ENCODE measurements at regions of chr12 and their contacts with region 1.

Region 1: GRCh38 chr12:130747867-130748740 is 32.0 kb upstream of the RIMBP2 start:
- DNase-seq: peak; percentile 66 to 80 (median 72)
- ATAC-seq: peak; percentile 100
- H3K4me3 ChIP-seq: no peak overlapping the region
- H3K27ac ChIP-seq: no peak overlapping the region
- H3K4me1 ChIP-seq: no peaks in the 10 kb centered on the region; a peak in 1 of 5 replicates
- H3K27me3 ChIP-seq: peaks cover 7 to 26% of the 10 kb centered on the region in 2 experiments
- CTCF ChIP-seq: peak; percentile 85 to 92 (median 88)
- EP300 ChIP-seq: no peak
- POLR2A ChIP-seq: no peak
- RAD21 ChIP-seq: peak; percentile 73 to 90

Region 2: DNA sequence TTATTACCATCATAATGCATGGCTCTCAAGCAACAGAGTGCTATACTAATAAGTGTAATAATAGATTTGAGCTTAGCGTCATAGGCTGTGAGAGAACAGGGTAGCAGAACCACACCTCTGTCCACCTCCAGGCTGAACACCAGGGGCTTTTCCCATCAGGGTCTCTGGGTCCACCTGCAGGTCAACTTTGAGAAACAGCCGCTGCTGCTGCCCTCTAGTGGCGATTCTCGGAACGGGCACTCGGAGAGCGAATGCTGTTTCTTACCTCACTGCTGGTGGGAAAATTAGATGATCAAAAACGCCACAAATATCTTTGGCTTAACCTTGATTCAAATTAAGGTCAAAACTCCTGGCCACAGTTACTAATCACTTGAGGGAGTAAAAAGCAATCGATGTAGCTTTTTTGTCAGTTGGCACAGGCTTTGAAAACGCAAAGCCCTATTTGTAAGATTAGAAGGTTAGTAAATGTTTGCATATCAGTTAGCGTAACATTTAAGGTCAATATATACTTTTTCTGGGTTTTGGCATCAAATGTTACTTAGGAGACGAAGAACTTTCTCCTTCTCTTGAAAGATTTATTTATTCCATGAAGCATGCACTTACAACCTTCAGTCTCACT is 716.4 kb before region 1 on chr12:
- CTCF ChIA-PET with region 1: no interaction called
- POLR2A ChIA-PET with region 1: no interaction called
- in situ Hi-C with region 1: loop called (anchors 25 kb)
- intact Hi-C with region 1: no loop called
- DNase-seq: peak; percentile 71 to 91 (median 80)
- ATAC-seq: peak; percentile 92
- H3K4me3 ChIP-seq: no peak overlapping the region
- H3K27ac ChIP-seq: no peak overlapping the region
- H3K4me1 ChIP-seq: no peaks in the 10 kb centered on the region
- H3K27me3 ChIP-seq: peaks cover 0 to 22% of the 10 kb centered on the region in 2 experiments; a peak in 4 of 5 replicates
- CTCF ChIP-seq: peak; percentile 98 to 100 (median 100)
- EP300 ChIP-seq: no peak
- POLR2A ChIP-seq: no peak
- RAD21 ChIP-seq: peak in 1 of 2 experiments; percentile 49; a peak in 2 of 4 replicates

Region 3: GRCh38 chr12:130041983-130042812 is 705.9 kb before region 1 on chr12:
- CTCF ChIA-PET with region 1: no interaction called
- POLR2A ChIA-PET with region 1: no interaction called
- in situ Hi-C with region 1: loop called (anchors 25 kb)
- intact Hi-C with region 1: loop called (anchors 5 kb)
- DNase-seq: peak; percentile 29 to 64 (median 58)
- ATAC-seq: peak; percentile 86
- H3K4me3 ChIP-seq: no peak overlapping the region
- H3K27ac ChIP-seq: no peak overlapping the region
- H3K4me1 ChIP-seq: no peaks in the 10 kb centered on the region
- H3K27me3 ChIP-seq: peaks cover 0 to 5% of the 10 kb centered on the region in 2 experiments; a peak in 2 of 5 replicates
- CTCF ChIP-seq: peak; percentile 48 to 62 (median 56)
- EP300 ChIP-seq: no peak
- POLR2A ChIP-seq: no peak
- RAD21 ChIP-seq: no peak; a peak in 1 of 4 replicates

Region 4: GRCh38 chr12:130281153-130281799 is 466.8 kb before region 1 on chr12:
- CTCF ChIA-PET with region 1: no interaction called
- POLR2A ChIA-PET with region 1: no interaction called
- in situ Hi-C with region 1: no loop called
- intact Hi-C with region 1: loop called (anchors 2 kb)
- DNase-seq: peak; percentile 50 to 67 (median 66)
- ATAC-seq: peak; percentile 96
- H3K4me3 ChIP-seq: no peak overlapping the region
- H3K27ac ChIP-seq: no peak overlapping the region
- H3K4me1 ChIP-seq: no peaks in the 10 kb centered on the region; a peak in 1 of 5 replicates
- H3K27me3 ChIP-seq: no peaks in the 10 kb centered on the region; a peak in 1 of 5 replicates
- CTCF ChIP-seq: peak; percentile 70 to 88 (median 83)
- EP300 ChIP-seq: no peak
- POLR2A ChIP-seq: no peak
- RAD21 ChIP-seq: peak in 1 of 2 experiments; percentile 36; a peak in 2 of 4 replicates

Region 5: GRCh38 chr12:130335517-130336392 is 412.3 kb before region 1 on chr12:
- CTCF ChIA-PET with region 1: no interaction called
- POLR2A ChIA-PET with region 1: no interaction called
- in situ Hi-C with region 1: no loop called
- intact Hi-C with region 1: loop called (anchors 5 kb)
- DNase-seq: peak; percentile 41 to 71 (median 47)
- ATAC-seq: peak; percentile 82
- H3K4me3 ChIP-seq: no peak overlapping the region
- H3K27ac ChIP-seq: no peak overlapping the region
- H3K4me1 ChIP-seq: peaks cover 0 to 3% of the 10 kb centered on the region in 2 experiments; a peak in 2 of 5 replicates
- H3K27me3 ChIP-seq: peaks cover 2 to 25% of the 10 kb centered on the region in 2 experiments; a peak in 2 of 5 replicates
- CTCF ChIP-seq: peak; percentile 54 to 78 (median 73); a peak in 5 of 6 replicates
- EP300 ChIP-seq: no peak
- POLR2A ChIP-seq: no peak
- RAD21 ChIP-seq: peak; percentile 63 to 84

Region 6: DNA sequence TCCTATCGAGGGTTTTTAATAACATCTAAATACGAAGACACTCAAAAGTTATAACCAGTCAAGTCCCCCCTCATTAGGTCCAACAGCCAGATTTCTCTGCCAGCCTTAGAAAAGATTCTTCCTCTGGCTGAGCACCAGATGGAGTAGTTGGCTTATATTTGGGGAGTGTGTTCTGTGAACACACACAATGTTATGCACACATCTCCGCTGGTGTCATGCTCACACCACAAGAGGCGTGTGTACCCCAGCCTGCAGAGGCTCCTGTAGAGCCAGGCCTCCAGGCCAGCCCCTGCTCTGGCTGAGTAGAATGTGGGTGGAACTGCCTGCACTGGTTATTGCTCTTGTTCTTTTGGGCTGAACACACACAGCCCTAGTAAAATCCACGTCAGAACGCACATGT is 346.4 kb before region 1 on chr12:
- CTCF ChIA-PET with region 1: no interaction called
- POLR2A ChIA-PET with region 1: no interaction called
- in situ Hi-C with region 1: loop called (anchors 5 kb)
- intact Hi-C with region 1: loop called (anchors 10 kb)
- DNase-seq: peak in 1 of 4 experiments; percentile 13
- ATAC-seq: peak; percentile 53
- H3K4me3 ChIP-seq: no peak overlapping the region
- H3K27ac ChIP-seq: no peak overlapping the region
- H3K4me1 ChIP-seq: no peaks in the 10 kb centered on the region
- H3K27me3 ChIP-seq: peaks cover 3 to 29% of the 10 kb centered on the region in 2 experiments; a peak in 4 of 5 replicates
- CTCF ChIP-seq: peak; percentile 27 to 43 (median 34); a peak in 4 of 6 replicates
- EP300 ChIP-seq: no peak
- POLR2A ChIP-seq: no peak
- RAD21 ChIP-seq: peak in 1 of 2 experiments; percentile 71; a peak in 2 of 4 replicates

Region 7: GRCh38 chr12:130633776-130634175 is 114.3 kb before region 1 on chr12:
- CTCF ChIA-PET with region 1: no interaction called
- POLR2A ChIA-PET with region 1: no interaction called
- in situ Hi-C with region 1: no loop called
- intact Hi-C with region 1: no loop called
- DNase-seq: no peak
- ATAC-seq: no peak
- H3K4me3 ChIP-seq: no peak overlapping the region
- H3K27ac ChIP-seq: no peak overlapping the region
- H3K4me1 ChIP-seq: no peaks in the 10 kb centered on the region; a peak in 1 of 5 replicates
- H3K27me3 ChIP-seq: peaks cover 6 to 43% of the 10 kb centered on the region in 2 experiments; a peak in 4 of 5 replicates
- CTCF ChIP-seq: no peak
- EP300 ChIP-seq: no peak
- POLR2A ChIP-seq: no peak
- RAD21 ChIP-seq: no peak

Region 8: DNA sequence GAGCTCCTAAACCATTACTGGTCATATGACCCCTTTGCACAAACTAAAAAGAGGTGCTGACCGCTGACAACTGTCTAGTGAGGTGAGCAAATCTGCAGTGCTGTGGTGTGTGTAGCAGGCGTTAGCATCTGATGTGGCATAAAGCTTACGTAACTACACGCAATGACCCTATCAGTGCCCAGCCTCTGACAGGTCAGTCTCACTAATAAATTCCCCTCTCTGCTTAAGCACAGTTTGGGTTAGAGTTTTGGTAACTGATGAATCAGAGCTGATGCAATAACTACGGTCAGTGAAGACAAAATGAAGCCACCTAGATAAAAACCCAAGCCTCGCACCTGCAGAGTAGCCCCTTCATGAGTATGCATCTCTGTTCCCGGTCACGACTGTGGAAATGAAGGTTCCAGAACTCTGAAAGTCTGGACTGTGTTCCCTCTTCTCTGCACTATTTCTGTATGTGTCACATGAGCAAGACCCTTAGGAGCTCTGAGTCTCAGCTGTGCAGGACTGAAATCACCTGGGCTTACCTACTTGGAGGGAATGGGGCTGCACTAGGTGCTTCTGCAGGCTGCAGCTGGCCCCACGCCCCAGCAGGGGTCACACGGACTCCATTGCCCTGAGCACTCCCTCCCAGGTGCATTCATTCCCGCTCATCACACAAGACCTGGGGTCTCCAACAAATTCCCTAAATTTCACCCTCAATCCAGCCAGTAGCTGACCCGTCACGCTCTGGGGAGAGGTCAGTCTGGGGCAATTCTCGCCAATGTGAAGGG is 86.4 kb before region 1 on chr12:
- CTCF ChIA-PET with region 1: no interaction called
- POLR2A ChIA-PET with region 1: no interaction called
- in situ Hi-C with region 1: no loop called
- intact Hi-C with region 1: loop called (anchors 5 kb)
- DNase-seq: peak in 1 of 4 experiments; percentile 22
- ATAC-seq: peak; percentile 80
- H3K4me3 ChIP-seq: no peak overlapping the region
- H3K27ac ChIP-seq: no peak overlapping the region
- H3K4me1 ChIP-seq: no peaks in the 10 kb centered on the region; a peak in 1 of 5 replicates
- H3K27me3 ChIP-seq: peaks cover 9 to 53% of the 10 kb centered on the region in 2 experiments; a peak in 4 of 5 replicates
- CTCF ChIP-seq: peak in 1 of 3 experiments; percentile 28; a peak in 2 of 6 replicates
- EP300 ChIP-seq: no peak
- POLR2A ChIP-seq: no peak
- RAD21 ChIP-seq: 0 out of 4 replicates have a peak, but pooled peaks of 1 of the 2 experiments have one; percentile 17

Region 9: GRCh38 chr12:130818635-130819576 is 70.8 kb after region 1 on chr12:
- CTCF ChIA-PET with region 1: no interaction called
- POLR2A ChIA-PET with region 1: no interaction called
- in situ Hi-C with region 1: no loop called
- intact Hi-C with region 1: no loop called
- DNase-seq: peak in 3 of 4 experiments; percentile 32 to 52 (median 48)
- ATAC-seq: peak; percentile 53
- H3K4me3 ChIP-seq: no peak overlapping the region
- H3K27ac ChIP-seq: no peak overlapping the region
- H3K4me1 ChIP-seq: peaks cover 0 to 11% of the 10 kb centered on the region in 2 experiments; a peak in 2 of 5 replicates
- H3K27me3 ChIP-seq: no peaks in the 10 kb centered on the region
- CTCF ChIP-seq: peak in 1 of 3 experiments; percentile 26; a peak in 1 of 6 replicates
- EP300 ChIP-seq: no peak
- POLR2A ChIP-seq: no peak
- RAD21 ChIP-seq: no peak

Region 10: DNA sequence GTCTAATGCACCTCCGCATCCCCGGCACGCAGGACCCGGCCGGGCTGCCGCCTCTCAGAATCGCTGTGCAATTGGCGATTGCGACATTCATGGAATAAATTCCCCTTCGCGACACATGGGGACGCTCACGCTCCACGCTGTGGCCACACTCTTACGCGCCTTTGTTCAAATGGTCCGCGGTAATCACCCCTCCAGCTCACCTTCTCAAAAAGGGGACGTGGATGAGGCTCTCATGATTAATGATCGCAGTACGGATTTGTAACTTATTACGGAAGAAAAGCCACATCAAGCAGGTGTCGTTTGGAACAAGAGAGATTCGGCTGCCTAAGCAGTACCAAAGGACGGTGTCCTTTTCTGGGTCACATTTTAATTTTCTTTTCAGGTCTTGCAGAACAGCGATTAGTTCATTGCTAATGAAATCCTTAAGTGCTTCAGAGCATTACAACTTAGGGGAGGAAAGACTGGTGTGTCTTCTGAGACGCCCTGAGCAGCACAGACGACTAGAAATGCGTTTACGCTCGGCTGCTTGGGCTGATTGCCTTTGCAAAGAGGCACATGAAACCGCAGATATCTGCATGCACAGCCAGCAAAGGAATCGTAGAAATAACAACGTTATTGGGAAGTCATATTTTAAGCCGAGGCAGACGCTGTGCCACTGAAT is 168.3 kb after region 1 on chr12:
- CTCF ChIA-PET with region 1: no interaction called
- POLR2A ChIA-PET with region 1: no interaction called
- in situ Hi-C with region 1: no loop called
- intact Hi-C with region 1: no loop called
- DNase-seq: peak; percentile 56 to 78 (median 62)
- ATAC-seq: peak; percentile 96
- H3K4me3 ChIP-seq: no peak overlapping the region
- H3K27ac ChIP-seq: no peak overlapping the region
- H3K4me1 ChIP-seq: peaks cover 2 to 3% of the 10 kb centered on the region in 2 experiments; a peak in 1 of 5 replicates
- H3K27me3 ChIP-seq: peaks cover 33 to 54% of the 10 kb centered on the region in 2 experiments
- CTCF ChIP-seq: peak; percentile 95 to 97 (median 96)
- EP300 ChIP-seq: no peak
- POLR2A ChIP-seq: no peak
- RAD21 ChIP-seq: peak; percentile 94 to 97

Measured in K562 (cell line).